Left ventricle myocardium inferior (tissue), 1 donor: ENCODE measurements at regions of chr21 and their contacts with region 1.

Region 1: DNA sequence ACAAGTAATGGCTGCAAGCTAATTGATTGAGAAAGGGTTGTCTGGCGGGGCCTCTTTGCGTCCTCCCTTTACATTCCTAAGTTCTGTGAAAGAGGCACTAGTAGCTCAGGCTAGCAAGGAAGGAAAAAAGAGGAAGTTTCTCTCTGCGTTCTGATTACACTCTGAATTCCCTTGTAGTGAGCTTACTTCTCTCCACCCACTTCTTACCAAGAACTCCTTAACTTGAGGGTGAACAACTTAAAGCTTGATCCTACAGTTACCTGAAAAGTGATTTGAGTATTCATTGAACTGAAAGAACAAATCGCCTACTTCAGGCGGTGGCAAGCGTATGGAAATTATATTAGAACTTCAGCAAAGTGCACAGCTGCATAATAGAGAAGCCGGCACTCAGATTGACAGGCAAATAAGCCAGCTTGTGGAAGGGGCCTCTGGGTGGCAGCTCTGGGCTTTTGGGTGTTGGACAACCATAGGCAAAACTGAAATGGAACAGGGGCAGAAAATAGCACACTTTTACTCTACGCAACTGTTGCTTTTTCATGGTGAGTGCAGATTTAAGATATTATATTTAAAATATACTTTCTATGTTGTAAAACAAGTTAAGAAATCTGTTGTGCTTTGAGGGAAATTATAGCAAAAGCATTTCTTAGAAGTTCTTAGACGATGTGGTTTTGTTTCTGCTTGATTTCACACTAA is 464.5 kb downstream of the USP25 start:
- DNase-seq: peak; percentile 58
- H3K4me3 ChIP-seq: peak overlapping the region; percentile 68
- H3K27ac ChIP-seq: peak overlapping the region; percentile 82
- H3K4me1 ChIP-seq: peaks cover 35% of the 10 kb centered on the region
- H3K27me3 ChIP-seq: no peaks in the 10 kb centered on the region
- CTCF ChIP-seq: peak; percentile 54

Region 2: DNA sequence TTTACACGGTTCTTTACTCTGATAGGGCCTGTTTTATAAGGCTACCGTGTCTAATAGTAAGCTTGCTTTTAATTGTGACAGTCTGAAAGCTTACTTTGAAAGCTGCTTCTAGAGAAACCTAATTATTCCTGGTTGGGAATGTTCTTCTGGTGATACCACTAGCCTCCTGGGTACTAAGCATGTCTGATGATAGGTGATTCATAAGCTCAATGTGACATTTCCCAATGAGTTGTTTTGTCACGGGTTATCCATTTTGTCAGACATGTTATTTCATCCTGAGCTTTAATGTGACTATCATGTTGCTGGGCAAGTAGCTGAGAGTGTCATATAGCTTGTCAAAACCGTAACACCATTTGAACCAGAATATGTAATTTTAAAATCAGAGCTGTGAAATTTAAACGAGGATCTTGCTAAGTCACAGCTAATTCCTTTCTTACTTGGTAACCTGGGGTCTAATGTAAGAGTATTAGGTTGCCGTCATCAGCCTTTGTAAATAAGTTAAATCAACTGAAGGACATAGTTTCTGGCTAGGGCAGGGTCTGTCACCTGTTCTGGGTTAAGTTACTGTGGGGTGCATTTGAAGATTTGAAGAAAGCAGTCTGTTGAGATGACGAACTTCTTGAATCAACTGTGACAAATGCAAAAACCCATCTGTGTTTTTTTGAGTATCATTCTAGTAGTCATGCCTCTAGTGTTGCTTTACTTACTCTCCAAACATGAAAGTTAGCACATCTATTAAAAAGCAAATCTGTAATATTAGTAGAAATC is 64.8 kb after region 1 on chr21:
- intact Hi-C with region 1: no loop called
- DNase-seq: no peak
- H3K4me3 ChIP-seq: no peak overlapping the region
- H3K27ac ChIP-seq: no peak overlapping the region
- H3K4me1 ChIP-seq: peaks cover 4% of the 10 kb centered on the region
- H3K27me3 ChIP-seq: no peaks in the 10 kb centered on the region
- CTCF ChIP-seq: no peak

Region 3: DNA sequence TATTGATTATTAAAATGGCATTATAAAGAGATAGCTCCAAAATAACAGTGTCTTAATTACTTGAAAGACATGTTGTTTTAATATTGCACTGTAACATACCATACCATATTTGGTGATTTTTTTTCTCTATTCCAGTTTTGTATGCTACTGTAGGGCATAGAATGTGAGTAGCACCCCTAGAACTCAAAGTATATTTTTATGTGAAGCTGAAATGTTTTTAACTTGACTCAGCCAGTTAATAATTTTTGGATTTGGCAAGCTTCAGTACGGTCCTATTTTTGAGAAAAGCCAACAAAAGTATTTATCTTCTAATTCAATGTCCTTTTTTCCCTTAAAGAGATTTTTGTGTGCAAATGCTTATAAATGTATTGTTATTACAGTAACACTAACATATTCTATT is 129.4 kb after region 1 on chr21:
- intact Hi-C with region 1: loop called (anchors 10 kb)
- DNase-seq: no peak
- H3K4me3 ChIP-seq: no peak overlapping the region
- H3K27ac ChIP-seq: no peak overlapping the region
- H3K4me1 ChIP-seq: peaks cover 5% of the 10 kb centered on the region
- H3K27me3 ChIP-seq: no peaks in the 10 kb centered on the region
- CTCF ChIP-seq: no peak

Region 4: DNA sequence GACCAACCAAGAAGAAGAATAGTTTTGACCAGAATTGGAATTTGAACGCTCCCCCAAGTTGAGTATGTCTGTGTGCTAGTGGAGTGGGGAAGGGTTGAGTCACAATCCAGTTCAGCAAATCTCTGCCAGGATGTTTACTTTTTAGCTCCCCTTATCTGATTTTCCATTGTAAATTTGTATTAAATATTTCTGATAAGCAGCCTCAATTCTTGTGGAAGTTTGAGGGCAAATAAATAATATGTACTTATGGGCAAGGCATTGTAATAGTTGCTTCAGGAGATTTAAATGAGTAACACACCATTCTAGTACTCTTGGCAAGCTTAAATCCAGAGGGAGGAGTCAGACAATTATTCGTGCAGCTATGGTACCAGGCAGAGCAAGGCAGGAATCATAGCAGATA is 1333.0 kb after region 1 on chr21:
- intact Hi-C with region 1: no loop called
- DNase-seq: no peak
- H3K4me3 ChIP-seq: no peak overlapping the region
- H3K27ac ChIP-seq: peak overlapping the region; percentile 40
- H3K4me1 ChIP-seq: peaks cover 42% of the 10 kb centered on the region
- H3K27me3 ChIP-seq: no peaks in the 10 kb centered on the region
- CTCF ChIP-seq: no peak